ENCODE measurements at regions of chr19 and their contacts with region 1.

Region 1: GRCh38 chr19:913080-913748 is at the start of gene R3HDM4:
- DNase-seq: peak; percentile 50
- H3K4me3 Mint-ChIP-seq: peak within 1 kb of the TSS; percentile 71
- H3K27ac Mint-ChIP-seq: peak within 1 kb of the TSS; percentile 85
- H3K4me1 Mint-ChIP-seq: peaks cover 9% of the 10 kb centered on the region
- H3K27me3 Mint-ChIP-seq: no peaks in the 10 kb centered on the region
- CTCF ChIP-seq: no peak
- total RNA-seq, gene R3HDM4: 65.7 and 73.6 TPM in 2 replicates

Region 2: DNA sequence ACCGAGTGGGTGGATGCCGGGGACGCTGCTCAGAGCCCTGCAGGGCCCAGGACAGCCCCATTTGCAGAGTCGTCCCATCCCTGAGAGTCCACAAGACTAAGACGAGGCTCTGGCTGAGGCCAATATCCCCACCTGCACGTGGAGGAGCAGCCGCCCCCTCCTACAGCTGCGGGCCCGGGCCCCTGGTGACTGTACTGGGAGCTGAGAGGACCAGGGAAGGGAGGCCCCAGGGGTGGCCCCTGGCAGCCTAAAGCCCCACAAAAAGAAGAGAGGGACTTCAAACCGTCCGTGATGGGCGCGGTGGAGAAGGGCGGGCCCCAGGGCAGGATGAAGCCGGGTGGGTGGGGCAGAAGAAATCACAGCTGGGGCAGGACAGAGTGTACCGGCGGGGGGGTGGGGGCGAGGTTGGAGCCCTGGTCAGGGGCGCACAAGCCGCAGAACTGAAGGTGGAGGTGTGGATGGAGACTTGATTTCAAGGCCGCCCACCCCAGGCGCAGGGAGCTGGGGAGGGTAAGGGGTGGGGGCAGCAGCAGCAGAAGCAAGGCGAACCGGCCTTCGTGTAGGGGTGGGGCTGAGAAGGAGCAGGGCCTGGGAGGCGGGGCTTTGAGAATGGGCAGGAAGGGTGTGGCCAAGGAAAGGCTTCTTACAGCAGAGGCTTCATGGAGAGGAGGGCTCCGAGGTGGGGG is 40.8 kb before region 1 on chr19:
- CTCF ChIA-PET with region 1: no interaction called
- POLR2A ChIA-PET with region 1: interaction called, 3 read pairs
- intact Hi-C with region 1: loop called (anchors 5 kb)
- DNase-seq: peak; percentile 95
- H3K4me3 Mint-ChIP-seq: peak overlapping the region; percentile 75
- H3K27ac Mint-ChIP-seq: peak overlapping the region; percentile 64
- H3K4me1 Mint-ChIP-seq: peaks cover 24% of the 10 kb centered on the region
- H3K27me3 Mint-ChIP-seq: no peaks in the 10 kb centered on the region
- CTCF ChIP-seq: no peak

Region 3: GRCh38 chr19:883661-884211 is 29.5 kb before region 1 on chr19:
- CTCF ChIA-PET with region 1: no interaction called
- POLR2A ChIA-PET with region 1: no interaction called
- intact Hi-C with region 1: loop called (anchors 1 kb)
- DNase-seq: peak; percentile 79
- H3K4me3 Mint-ChIP-seq: no peak overlapping the region
- H3K27ac Mint-ChIP-seq: no peak overlapping the region
- H3K4me1 Mint-ChIP-seq: peaks cover 14% of the 10 kb centered on the region
- H3K27me3 Mint-ChIP-seq: no peaks in the 10 kb centered on the region
- CTCF ChIP-seq: peak; percentile 40